ENCODE measurements at regions of chr21 and their contacts with region 1.

Region 1: DNA sequence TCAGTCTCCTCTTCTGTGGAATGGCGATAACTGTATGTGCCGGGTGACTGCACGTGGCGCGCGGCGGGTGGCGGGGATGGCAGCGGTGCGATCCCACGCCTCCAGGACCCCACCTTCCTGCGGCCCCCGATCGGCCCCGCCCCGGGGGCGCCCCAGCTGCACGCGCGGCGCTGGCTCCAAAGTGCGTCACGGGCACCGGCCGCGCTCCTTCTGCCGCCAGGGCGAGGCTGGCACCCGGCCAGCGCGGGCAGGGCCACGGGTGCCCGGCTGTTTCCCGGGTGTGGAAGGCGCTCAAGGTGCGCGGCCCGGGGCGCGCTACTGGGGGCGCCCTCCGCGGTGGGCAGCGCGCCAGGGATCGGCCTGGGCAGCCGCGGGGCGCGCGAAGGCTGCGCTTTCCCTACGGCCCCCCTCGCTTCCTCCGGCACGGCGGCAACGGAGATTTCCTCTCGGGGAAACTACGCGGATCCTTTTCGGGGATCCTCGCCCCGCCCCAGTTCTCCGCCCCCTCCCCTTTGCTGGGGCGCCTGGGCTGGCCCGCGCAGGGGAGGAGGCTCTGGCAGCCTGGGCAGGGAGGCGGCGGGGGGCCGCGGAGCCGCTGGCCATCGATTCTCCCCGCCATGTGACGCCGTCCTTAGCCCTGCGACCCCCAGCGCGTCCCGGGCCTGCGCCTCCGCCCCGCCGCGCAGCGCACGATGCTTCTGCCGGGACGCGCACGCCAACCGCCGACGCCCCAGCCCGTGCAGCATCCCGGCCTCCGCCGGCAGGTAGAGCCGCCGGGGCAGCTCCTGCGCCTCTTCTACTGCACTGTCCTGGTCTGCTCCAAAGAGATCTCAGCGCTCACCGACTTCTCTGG is at the start of gene EVA1C:
- DNase-seq: peak in 7 of 10 donors; percentile 20 to 78 (median 43)
- H3K4me3 ChIP-seq: peak within 1 kb of the TSS; percentile 61 to 92 (median 81)
- H3K27ac ChIP-seq: peak within 1 kb of the TSS; percentile 86 to 100 (median 99)
- H3K27me3 ChIP-seq: no peaks in the 10 kb centered on the region
- CTCF ChIP-seq: peak in 23 of 56 donors; percentile 1 to 55 (median 24)
- total RNA-seq, gene EVA1C: 15.9 to 52.5 (median 27.2) TPM

Region 2: GRCh38 chr21:32456497-32456918 is 44.1 kb after region 1 on chr21:
- intact Hi-C with region 1: loop called in 1 of 2 experiments (anchors 5 kb)
- DNase-seq: peak in 1 of 10 donors; percentile 16
- H3K4me3 ChIP-seq: no peak overlapping the region
- H3K27ac ChIP-seq: peak overlapping the region in 52 of 59 donors; percentile 5 to 83 (median 66)
- H3K27me3 ChIP-seq: no peaks in the 10 kb centered on the region
- CTCF ChIP-seq: no peak

Region 3: GRCh38 chr21:32494934-32495703 is 82.7 kb after region 1 on chr21:
- intact Hi-C with region 1: loop called in 1 of 2 experiments (anchors 5 kb)
- DNase-seq: peak in 2 of 10 donors; percentile 32 to 33
- H3K4me3 ChIP-seq: no peak overlapping the region
- H3K27ac ChIP-seq: peak overlapping the region in 18 of 59 donors; percentile 1 to 52 (median 23)
- H3K27me3 ChIP-seq: no peaks in the 10 kb centered on the region
- CTCF ChIP-seq: no peak

Region 4: GRCh38 chr21:32569261-32570230 is 157.2 kb after region 1 on chr21:
- intact Hi-C with region 1: loop called in 1 of 2 experiments (anchors 5 kb)
- DNase-seq: peak in 9 of 10 donors; percentile 47 to 76 (median 68)
- H3K4me3 ChIP-seq: peak overlapping the region; percentile 49 to 88 (median 64)
- H3K27ac ChIP-seq: peak overlapping the region in 40 of 59 donors; percentile 20 to 86 (median 57)
- H3K27me3 ChIP-seq: no peaks in the 10 kb centered on the region
- CTCF ChIP-seq: peak; percentile 58 to 91 (median 80)

Region 5: GRCh38 chr21:32727687-32728455 is 315.5 kb after region 1 on chr21 and contains the start of gene SYNJ1:
- intact Hi-C with region 1: loop called in 1 of 2 experiments (anchors 2 kb)
- DNase-seq: peak; percentile 85 to 98 (median 93)
- H3K4me3 ChIP-seq: peak within 1 kb of the TSS; percentile 69 to 100 (median 96)
- H3K27ac ChIP-seq: peak within 1 kb of the TSS; percentile 63 to 98 (median 92)
- H3K27me3 ChIP-seq: no peaks in the 10 kb centered on the region
- CTCF ChIP-seq: peak in 21 of 56 donors; percentile 3 to 47 (median 20)
- total RNA-seq, gene SYNJ1: 60.7 to 224 (median 158) TPM